ENCODE measurements at regions of chr2 and their contacts with region 1.

Region 1: GRCh38 chr2:25606892-25607291 is 66.5 kb downstream of the DTNB start:
- DNase-seq: no peak
- H3K4me3 ChIP-seq: no peak overlapping the region
- H3K27ac ChIP-seq: no peak overlapping the region
- H3K4me1 ChIP-seq: no peaks in the 10 kb centered on the region
- H3K27me3 ChIP-seq: no peaks in the 10 kb centered on the region
- CTCF ChIP-seq: peak; percentile 44 to 65 (median 61)
- POLR2A ChIP-seq: no peak

Region 2: GRCh38 chr2:25159949-25160348 is 446.9 kb before region 1 on chr2:
- intact Hi-C with region 1: no loop called
- DNase-seq: no peak
- H3K4me3 ChIP-seq: no peak overlapping the region
- H3K27ac ChIP-seq: no peak overlapping the region
- H3K4me1 ChIP-seq: no peaks in the 10 kb centered on the region
- H3K27me3 ChIP-seq: no peaks in the 10 kb centered on the region
- CTCF ChIP-seq: no peak
- POLR2A ChIP-seq: no peak

Region 3: DNA sequence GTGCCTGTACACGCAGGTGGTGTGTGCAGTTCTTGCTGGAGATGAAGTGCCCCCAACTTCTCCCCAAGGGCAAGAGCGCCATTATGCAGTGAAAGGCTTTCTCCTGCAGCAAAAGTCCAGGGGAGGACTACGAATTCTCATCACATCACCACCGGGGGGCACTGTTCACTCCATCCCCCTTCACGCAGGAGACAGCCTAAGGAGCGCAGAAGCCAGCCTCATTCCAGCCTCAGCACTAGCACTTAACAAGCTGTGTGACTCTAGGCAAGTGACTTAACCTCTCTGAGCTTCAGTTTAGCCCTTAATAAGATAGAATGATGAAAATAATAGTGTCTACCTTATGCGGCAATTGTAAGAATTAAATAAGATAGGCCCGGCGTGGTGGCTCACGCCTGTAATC is 297.5 kb before region 1 on chr2:
- intact Hi-C with region 1: no loop called
- DNase-seq: peak; percentile 73
- H3K4me3 ChIP-seq: no peak overlapping the region
- H3K27ac ChIP-seq: no peak overlapping the region
- H3K4me1 ChIP-seq: peaks cover 53% of the 10 kb centered on the region
- H3K27me3 ChIP-seq: no peaks in the 10 kb centered on the region
- CTCF ChIP-seq: peak in 2 of 3 experiments; percentile 33 to 34
- POLR2A ChIP-seq: no peak

Region 4: DNA sequence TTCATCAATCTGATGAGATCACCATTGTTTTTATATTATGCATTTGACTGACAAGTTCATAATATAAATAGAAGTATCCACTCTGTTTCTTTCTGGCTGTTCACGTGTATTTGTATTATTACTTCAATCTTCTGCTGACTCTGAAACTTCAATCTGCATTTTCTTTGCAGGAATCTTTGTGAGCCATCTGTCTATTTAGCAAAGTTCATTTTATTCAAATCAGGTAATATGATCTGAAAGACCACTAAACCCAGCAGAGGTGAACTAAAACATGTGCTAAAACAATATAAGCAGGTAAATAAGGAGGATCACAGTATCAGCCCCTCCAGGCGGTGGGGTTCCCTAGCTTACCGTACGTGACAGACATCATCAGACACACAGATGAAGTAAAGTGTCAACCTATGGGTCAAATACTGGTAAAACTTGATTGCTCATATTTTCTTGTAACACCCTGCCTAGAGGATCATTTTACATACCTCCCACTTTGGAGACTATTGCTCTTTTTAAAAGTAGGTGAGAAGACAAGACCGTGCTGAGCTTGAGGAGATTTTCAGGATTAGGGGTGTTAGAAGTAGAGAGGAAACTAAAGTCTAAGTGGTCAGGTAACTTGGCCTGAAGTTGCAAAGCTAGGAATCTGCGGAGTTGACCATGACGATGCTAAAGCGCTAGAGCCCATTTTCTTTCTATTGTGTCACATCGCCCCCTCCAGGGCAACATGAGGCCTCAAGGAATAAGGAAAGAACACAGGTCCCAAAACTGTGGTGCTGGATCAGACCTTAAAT is 57.5 kb after region 1 on chr2:
- intact Hi-C with region 1: loop called (anchors 10 kb)
- DNase-seq: peak; percentile 78
- H3K4me3 ChIP-seq: no peak overlapping the region
- H3K27ac ChIP-seq: no peak overlapping the region
- H3K4me1 ChIP-seq: no peaks in the 10 kb centered on the region
- H3K27me3 ChIP-seq: no peaks in the 10 kb centered on the region
- CTCF ChIP-seq: peak; percentile 37 to 66 (median 55)
- POLR2A ChIP-seq: no peak

Region 5: GRCh38 chr2:25749676-25750075 is 142.8 kb after region 1 on chr2:
- intact Hi-C with region 1: no loop called
- DNase-seq: no peak
- H3K4me3 ChIP-seq: no peak overlapping the region
- H3K27ac ChIP-seq: no peak overlapping the region
- H3K4me1 ChIP-seq: no peaks in the 10 kb centered on the region
- H3K27me3 ChIP-seq: no peaks in the 10 kb centered on the region
- CTCF ChIP-seq: no peak
- POLR2A ChIP-seq: no peak

Measured in testis (tissue), 5 donors.